ENCODE measurements at regions of chrX and their contacts with region 1.

Region 1: DNA sequence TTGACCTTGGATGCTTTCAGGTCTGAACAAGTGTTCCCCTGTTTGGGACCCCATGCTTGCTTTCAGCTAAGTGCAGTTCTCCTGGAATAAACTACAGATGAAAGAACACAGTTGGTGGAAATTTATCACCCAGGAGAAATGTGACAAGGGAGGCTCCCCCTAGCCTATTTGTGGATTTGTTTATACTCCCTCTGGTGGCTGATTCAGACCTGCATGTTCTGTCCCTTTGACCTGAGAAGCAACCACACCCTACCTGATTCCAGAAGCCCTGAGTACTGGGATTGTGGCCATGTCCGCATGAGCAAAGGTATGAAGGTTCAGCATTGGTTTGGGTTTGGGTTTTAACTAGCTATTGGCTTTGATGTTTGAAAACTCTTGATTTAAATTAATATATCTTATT is 440.9 kb downstream of the MID1IP1 start:
- DNase-seq: no peak

Region 2: GRCh38 chrX:38754102-38754790 is 487.9 kb before region 1 on chrX:
- intact Hi-C with region 1: loop called (anchors 10 kb)
- DNase-seq: no peak

Region 3: DNA sequence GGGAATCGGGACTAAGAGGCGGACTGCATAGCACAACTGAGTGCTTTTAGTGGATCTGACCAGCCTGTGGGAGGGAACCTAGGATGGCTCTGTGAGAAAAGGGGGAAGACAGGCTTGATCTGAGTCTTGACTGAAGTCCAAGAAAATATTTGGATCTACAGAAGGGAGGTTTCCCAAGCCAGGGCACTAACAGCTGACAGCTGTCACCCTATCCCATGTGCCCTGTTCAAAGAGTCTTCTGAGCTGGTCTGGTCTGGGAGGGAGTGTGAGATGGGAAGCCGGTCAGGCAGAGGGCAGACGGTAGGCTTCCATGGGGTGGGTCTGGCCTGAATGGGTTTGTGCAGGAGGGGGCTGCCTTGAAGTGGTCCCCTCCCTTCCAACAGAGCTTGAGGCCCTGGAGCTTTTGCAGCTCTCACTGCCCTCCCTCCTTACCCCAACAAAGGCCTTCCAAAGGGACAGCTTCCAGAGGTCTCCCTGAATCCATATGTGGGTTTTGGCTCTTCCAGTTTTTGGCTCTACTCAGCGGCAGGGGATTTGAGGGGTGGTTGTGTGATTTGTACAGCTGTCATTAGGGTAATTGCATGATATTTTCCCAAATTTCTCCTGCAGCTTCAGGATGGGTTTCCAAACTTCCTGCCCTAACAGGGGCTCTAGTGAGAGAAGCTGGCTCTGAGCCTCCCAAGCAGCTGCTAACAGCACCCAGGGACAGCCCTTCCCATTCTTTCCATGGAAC is 211.9 kb after region 1 on chrX:
- intact Hi-C with region 1: no loop called
- DNase-seq: no peak

Measured in cardiac septum (tissue), 1 donor.